ENCODE measurements at regions of chr6 and their contacts with region 1.

Region 1: DNA sequence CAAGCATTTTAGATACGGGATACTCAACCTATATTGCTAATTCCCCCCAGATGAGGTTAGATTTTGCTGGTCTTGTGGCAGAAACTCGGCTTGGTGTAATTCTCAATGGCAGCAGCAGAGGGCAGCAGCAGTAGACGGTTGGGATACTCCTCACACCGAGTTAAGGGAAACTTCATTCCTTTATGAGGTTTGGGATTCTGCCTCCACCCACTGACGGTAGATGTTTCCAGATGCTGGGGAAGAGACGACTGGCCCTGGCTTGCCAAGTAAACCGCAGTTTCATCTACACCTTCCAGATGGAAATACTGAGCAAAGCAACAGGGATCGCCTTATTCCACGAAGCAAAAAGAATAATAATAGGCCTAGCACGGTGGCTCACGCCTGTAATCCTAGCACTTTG is 8.2 kb upstream of the TBC1D7 start:
- DNase-seq: peak; percentile 73
- ATAC-seq: peak; percentile 87
- H3K4me3 ChIP-seq: no peak overlapping the region
- H3K27ac ChIP-seq: no peak overlapping the region
- H3K4me1 ChIP-seq: peaks cover 0 to 9% of the 10 kb centered on the region in 2 experiments; a peak in 2 of 4 replicates
- H3K27me3 ChIP-seq: no peaks in the 10 kb centered on the region
- CTCF ChIP-seq: peak; percentile 75 to 93 (median 88)
- POLR2A ChIP-seq: no peak
- RAD21 ChIP-seq: peak; percentile 97

Region 2: GRCh38 chr6:13538084-13538483 is 201.5 kb after region 1 on chr6:
- CTCF ChIA-PET with region 1: interaction called, 8 read pairs
- POLR2A ChIA-PET with region 1: no interaction called
- RAD21 ChIA-PET with region 1: no interaction called
- intact Hi-C with region 1: loop called (anchors 1 kb)
- DNase-seq: peak; percentile 26
- ATAC-seq: peak; percentile 67
- H3K4me3 ChIP-seq: no peak overlapping the region
- H3K27ac ChIP-seq: no peak overlapping the region
- H3K4me1 ChIP-seq: no peaks in the 10 kb centered on the region
- H3K27me3 ChIP-seq: no peaks in the 10 kb centered on the region
- CTCF ChIP-seq: peak; percentile 25 to 59 (median 36); a peak in 4 of 6 replicates
- POLR2A ChIP-seq: no peak
- RAD21 ChIP-seq: peak; percentile 69

Region 3: DNA sequence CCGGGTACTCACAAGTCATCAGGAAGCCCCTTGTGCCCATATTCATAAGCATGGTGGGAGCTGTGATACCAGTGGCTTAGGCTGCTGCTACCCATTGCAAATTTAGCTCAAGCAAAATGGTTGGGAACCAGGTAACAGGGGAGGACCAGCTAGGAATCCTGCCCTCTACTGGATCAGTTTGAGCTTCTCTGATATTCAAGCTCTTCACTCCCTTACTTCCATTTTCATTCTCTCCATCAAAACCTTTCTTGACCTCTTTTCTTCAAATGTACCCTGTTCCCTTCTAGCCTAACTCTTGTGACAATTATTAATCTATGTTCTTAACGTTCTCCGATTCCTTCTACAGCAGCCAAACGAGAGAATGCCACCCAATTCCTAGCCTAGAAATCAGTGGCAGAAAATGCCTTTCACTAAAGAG is 288.3 kb after region 1 on chr6:
- CTCF ChIA-PET with region 1: interaction called, 4 read pairs
- POLR2A ChIA-PET with region 1: no interaction called
- RAD21 ChIA-PET with region 1: no interaction called
- intact Hi-C with region 1: loop called (anchors 1 kb)
- DNase-seq: peak; percentile 47
- ATAC-seq: peak; percentile 94
- H3K4me3 ChIP-seq: no peak overlapping the region
- H3K27ac ChIP-seq: no peak overlapping the region
- H3K4me1 ChIP-seq: no peaks in the 10 kb centered on the region
- H3K27me3 ChIP-seq: no peaks in the 10 kb centered on the region
- CTCF ChIP-seq: peak in 2 of 3 experiments; percentile 67 to 71; a peak in 4 of 6 replicates
- POLR2A ChIP-seq: no peak
- RAD21 ChIP-seq: peak; percentile 53

Region 4: DNA sequence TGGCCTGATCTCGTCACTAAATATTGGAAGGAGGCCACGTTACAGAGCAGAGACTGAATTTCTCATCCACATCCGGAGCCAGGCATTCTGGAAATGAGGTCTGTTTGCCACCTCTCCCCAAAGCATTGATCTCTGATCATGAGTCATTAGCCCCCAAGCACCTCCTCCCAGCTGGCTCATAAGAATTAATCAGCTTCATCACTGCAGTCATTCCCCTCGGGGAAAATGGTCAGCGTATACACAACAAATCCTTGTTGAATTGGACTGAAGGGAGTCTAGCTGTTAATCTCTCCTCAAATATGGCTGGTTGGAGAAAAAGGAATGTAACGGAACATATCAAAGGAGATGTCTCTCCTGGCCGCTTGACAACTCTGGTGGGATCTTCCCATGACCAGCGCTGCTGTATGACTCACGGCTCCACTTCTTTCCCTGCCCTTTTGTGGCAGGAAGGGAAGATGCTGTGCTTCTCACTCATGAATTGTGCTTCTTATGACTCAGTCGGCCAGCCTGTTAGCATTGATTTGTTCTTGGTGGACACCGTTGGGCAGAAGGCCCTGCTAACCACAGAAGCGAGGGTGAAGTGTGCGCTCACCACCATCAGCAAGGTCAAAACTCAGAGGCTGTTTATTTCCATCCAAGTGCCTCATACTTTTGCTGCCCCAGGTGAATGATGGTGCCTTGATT is 664.9 kb after region 1 on chr6:
- CTCF ChIA-PET with region 1: no interaction called
- POLR2A ChIA-PET with region 1: no interaction called
- RAD21 ChIA-PET with region 1: no interaction called
- intact Hi-C with region 1: no loop called
- DNase-seq: peak; percentile 95
- ATAC-seq: peak; percentile 86
- H3K4me3 ChIP-seq: peak overlapping the region; percentile 8 to 28; a peak in 3 of 4 replicates
- H3K27ac ChIP-seq: peak overlapping the region; percentile 4; the same call in 1 of the 2 replicates
- H3K4me1 ChIP-seq: peaks cover 16 to 33% of the 10 kb centered on the region in 2 experiments
- H3K27me3 ChIP-seq: no peaks in the 10 kb centered on the region
- CTCF ChIP-seq: no peak
- POLR2A ChIP-seq: no peak
- RAD21 ChIP-seq: peak; percentile 29